CD4-positive, alpha-beta memory T cell (primary cell): ENCODE measurements at regions of chr1 and their contacts with region 1.

Region 1: DNA sequence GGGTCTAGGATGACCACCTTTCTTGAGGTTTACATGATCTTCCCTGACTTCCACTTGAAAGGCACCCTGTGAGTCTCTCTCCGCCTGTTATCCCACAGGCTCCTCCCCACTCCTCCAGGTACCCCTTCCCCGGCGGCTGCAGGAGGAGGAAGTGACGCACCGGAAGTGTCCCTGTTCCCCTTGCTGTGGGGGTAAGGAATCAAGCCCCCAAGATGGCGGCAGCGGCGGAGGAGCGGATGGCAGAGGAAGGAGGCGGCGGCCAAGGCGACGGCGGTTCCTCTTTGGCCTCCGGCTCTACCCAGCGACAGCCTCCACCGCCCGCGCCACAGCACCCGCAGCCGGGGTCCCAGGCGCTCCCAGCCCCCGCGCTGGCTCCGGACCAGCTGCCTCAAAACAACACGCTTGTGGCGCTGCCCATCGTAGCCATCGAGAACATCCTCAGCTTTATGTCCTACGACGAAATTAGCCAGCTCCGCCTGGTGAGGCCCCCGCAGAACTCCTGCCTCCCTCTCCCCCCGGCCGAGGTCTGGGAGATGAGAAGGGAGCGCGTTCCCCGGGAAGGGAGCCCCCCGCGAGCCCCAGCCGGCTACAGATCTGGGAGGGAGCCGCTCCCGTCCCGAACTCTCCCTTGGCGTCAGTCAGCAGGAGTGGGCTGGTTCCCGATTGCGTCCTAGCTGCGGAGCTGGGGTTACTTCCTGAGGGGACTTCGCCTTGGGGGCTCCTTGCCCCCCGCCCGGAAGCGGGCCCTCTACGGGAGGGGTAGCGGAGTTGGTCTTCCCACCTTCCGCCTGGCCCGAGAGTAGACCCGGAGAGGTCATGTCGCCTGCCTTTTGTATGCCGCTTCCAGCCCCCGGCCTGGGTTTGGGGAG is at the start of gene FBXO28:
- DNase-seq: peak; percentile 87 to 95 (median 89)
- H3K4me3 ChIP-seq: peak within 1 kb of the TSS; percentile 53 to 54
- H3K4me3 Mint-ChIP-seq: peak within 1 kb of the TSS; percentile 87 to 97 (median 94)
- H3K27ac ChIP-seq: peak within 1 kb of the TSS; percentile 97
- H3K27ac Mint-ChIP-seq: peak within 1 kb of the TSS; percentile 84 to 97 (median 95)
- H3K4me1 ChIP-seq: peaks cover 32% of the 10 kb centered on the region
- H3K4me1 Mint-ChIP-seq: peaks cover 17 to 32% (median 24%) of the 10 kb centered on the region in 4 donors
- H3K27me3 ChIP-seq: no peaks in the 10 kb centered on the region
- H3K27me3 Mint-ChIP-seq: peaks cover 0 to 2% of the 10 kb centered on the region in 2 donors
- total RNA-seq, gene FBXO28: 36.4 to 39.7 TPM

Region 2: GRCh38 chr1:224245188-224245587 is 131.0 kb after region 1 on chr1:
- CTCF ChIA-PET with region 1: no interaction called
- POLR2A ChIA-PET with region 1: no interaction called
- intact Hi-C with region 1: loop called (anchors 10 kb)
- DNase-seq: peak in 4 of 5 donors; percentile 29 to 49 (median 39)
- H3K4me3 ChIP-seq: no peak overlapping the region
- H3K4me3 Mint-ChIP-seq: peak overlapping the region in 7 of 8 donors; percentile 12 to 69 (median 39)
- H3K27ac ChIP-seq: no peak overlapping the region
- H3K27ac Mint-ChIP-seq: peak overlapping the region; percentile 78 to 94 (median 87)
- H3K4me1 ChIP-seq: peaks cover 24% of the 10 kb centered on the region
- H3K4me1 Mint-ChIP-seq: peaks cover 15 to 31% (median 18%) of the 10 kb centered on the region in 4 donors
- H3K27me3 ChIP-seq: no peaks in the 10 kb centered on the region
- H3K27me3 Mint-ChIP-seq: no peaks in the 10 kb centered on the region